ENCODE measurements at regions of chr1 and their contacts with region 1.

Region 1: GRCh38 chr1:21216835-21217811 is 40.4 kb upstream of the EIF4G3 start:
- DNase-seq: peak; percentile 67
- H3K4me3 ChIP-seq: no peak overlapping the region; a peak in 1 of 4 replicates
- H3K27ac ChIP-seq: no peak overlapping the region; a peak in 1 of 4 replicates
- H3K4me1 ChIP-seq: peaks cover 0 to 13% of the 10 kb centered on the region in 2 experiments; a peak in 1 of 4 replicates
- H3K27me3 ChIP-seq: no peaks in the 10 kb centered on the region
- CTCF ChIP-seq: peak; percentile 86
- EP300 ChIP-seq: no peak
- RAD21 ChIP-seq: peak; percentile 52

Region 2: DNA sequence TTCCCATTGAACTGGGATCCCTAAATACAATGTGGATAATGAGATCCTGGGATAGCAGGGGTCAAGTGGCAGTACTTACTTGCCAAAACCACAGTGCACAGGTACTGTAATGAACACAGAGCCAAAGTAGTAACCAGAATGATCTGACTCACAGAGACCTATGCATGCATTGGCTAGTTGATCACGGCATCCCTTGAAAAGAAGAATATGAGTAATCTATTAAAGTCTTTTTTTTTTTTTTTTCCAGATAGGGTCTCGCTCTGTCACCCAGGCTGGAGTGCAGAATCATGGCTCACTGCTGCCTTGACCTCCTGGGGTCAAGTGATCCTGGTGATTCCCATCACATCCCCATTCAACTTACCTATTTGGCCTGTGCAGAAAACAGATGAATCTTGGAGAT is 11.0 kb before region 1 on chr1:
- CTCF ChIA-PET with region 1: interaction called, 13 read pairs
- POLR2A ChIA-PET with region 1: no interaction called
- DNase-seq: no peak
- H3K4me3 ChIP-seq: no peak overlapping the region
- H3K27ac ChIP-seq: no peak overlapping the region
- H3K4me1 ChIP-seq: peaks cover 0 to under 1% of the 10 kb centered on the region in 2 experiments; a peak in 2 of 4 replicates
- H3K27me3 ChIP-seq: no peaks in the 10 kb centered on the region
- CTCF ChIP-seq: no peak
- EP300 ChIP-seq: no peak
- RAD21 ChIP-seq: no peak

Region 3: GRCh38 chr1:21238141-21238800 is 21.1 kb after region 1 on chr1:
- CTCF ChIA-PET with region 1: interaction called, 76 read pairs
- POLR2A ChIA-PET with region 1: no interaction called
- DNase-seq: no peak
- H3K4me3 ChIP-seq: no peak overlapping the region
- H3K27ac ChIP-seq: no peak overlapping the region
- H3K4me1 ChIP-seq: no peaks in the 10 kb centered on the region
- H3K27me3 ChIP-seq: no peaks in the 10 kb centered on the region
- CTCF ChIP-seq: no peak
- EP300 ChIP-seq: no peak
- RAD21 ChIP-seq: no peak

Region 4: GRCh38 chr1:21244986-21245687 is 28.0 kb after region 1 on chr1:
- CTCF ChIA-PET with region 1: interaction called, 14 read pairs
- POLR2A ChIA-PET with region 1: no interaction called
- DNase-seq: peak; percentile 43
- H3K4me3 ChIP-seq: no peak overlapping the region
- H3K27ac ChIP-seq: no peak overlapping the region
- H3K4me1 ChIP-seq: no peaks in the 10 kb centered on the region
- H3K27me3 ChIP-seq: no peaks in the 10 kb centered on the region
- CTCF ChIP-seq: peak; percentile 57
- EP300 ChIP-seq: no peak
- RAD21 ChIP-seq: no peak

Region 5: GRCh38 chr1:21362096-21362495 is 145.0 kb after region 1 on chr1:
- CTCF ChIA-PET with region 1: interaction called, 12 read pairs
- POLR2A ChIA-PET with region 1: no interaction called
- DNase-seq: no peak
- H3K4me3 ChIP-seq: no peak overlapping the region
- H3K27ac ChIP-seq: peak overlapping the region in 1 of 2 experiments; percentile 12; a peak in 1 of 4 replicates
- H3K4me1 ChIP-seq: peaks cover 0 to 7% of the 10 kb centered on the region in 2 experiments; a peak in 1 of 4 replicates
- H3K27me3 ChIP-seq: no peaks in the 10 kb centered on the region
- CTCF ChIP-seq: no peak
- EP300 ChIP-seq: no peak
- RAD21 ChIP-seq: 0 out of 2 replicates have a peak, but pooled peaks have one; percentile 3